Caco-2 (cell line): ENCODE measurements at regions of chr22 and their contacts with region 1.

Region 1: GRCh38 chr22:30733181-30733631 is 38.5 kb downstream of the OSBP2 start:
- DNase-seq: no peak
- H3K4me3 ChIP-seq: no peak overlapping the region
- H3K4me3 Mint-ChIP-seq: no peak overlapping the region
- H3K27ac Mint-ChIP-seq: no peak overlapping the region
- H3K4me1 ChIP-seq: no peaks in the 10 kb centered on the region
- H3K4me1 Mint-ChIP-seq: no peaks in the 10 kb centered on the region
- H3K27me3 ChIP-seq: no peaks in the 10 kb centered on the region
- H3K27me3 Mint-ChIP-seq: peaks cover 5% of the 10 kb centered on the region
- CTCF ChIP-seq: no peak

Region 2: GRCh38 chr22:30705710-30706651 is 27.2 kb before region 1 on chr22:
- CTCF ChIA-PET with region 1: no interaction called
- POLR2A ChIA-PET with region 1: no interaction called
- intact Hi-C with region 1: loop called (anchors 1 kb)
- DNase-seq: no peak
- H3K4me3 ChIP-seq: no peak overlapping the region
- H3K4me3 Mint-ChIP-seq: no peak overlapping the region
- H3K27ac Mint-ChIP-seq: no peak overlapping the region
- H3K4me1 ChIP-seq: no peaks in the 10 kb centered on the region
- H3K4me1 Mint-ChIP-seq: peaks cover 6% of the 10 kb centered on the region
- H3K27me3 ChIP-seq: no peaks in the 10 kb centered on the region
- H3K27me3 Mint-ChIP-seq: peaks cover 2% of the 10 kb centered on the region
- CTCF ChIP-seq: no peak

Region 3: DNA sequence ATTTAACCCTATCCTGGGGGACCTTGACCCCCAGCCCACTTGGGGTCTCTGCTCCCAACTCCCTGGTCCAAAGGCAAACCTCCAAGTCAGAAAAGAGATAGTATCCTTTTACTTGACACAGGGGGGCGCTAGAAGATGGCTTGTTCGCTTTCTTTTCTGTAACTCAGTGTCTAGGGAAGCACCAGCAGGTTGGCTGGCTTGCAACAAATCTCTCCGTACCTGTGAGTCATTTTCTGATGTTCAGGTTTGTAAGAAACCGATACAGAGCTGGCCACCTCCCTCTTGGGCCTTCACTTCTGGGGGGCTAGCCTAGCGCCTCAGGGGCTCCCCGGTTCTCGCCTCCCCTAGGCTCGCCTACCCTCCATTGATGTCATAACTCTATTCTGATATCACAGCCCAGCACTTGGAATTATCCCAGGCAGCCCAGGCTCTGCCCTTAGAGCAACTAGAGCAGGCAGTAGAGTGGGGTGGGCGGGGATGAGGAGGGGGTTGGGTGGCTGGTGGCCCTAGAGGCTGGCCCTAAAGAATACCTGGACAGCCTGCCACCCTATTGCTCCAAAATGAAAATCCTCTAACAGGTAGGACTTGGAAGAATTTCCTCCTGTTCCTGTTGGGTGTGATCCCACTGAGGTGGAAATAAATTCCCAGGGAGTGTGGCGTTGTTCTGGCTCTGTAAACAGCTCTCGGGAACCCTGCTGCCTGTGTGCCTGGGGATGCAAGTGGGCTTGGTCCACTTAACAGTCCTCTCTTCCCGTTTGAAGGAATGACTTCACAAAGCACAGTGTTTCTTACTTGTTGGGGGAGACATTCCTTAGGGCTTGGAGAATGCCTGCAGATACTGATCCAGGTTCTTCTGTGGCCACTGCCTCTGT is 30.8 kb after region 1 on chr22:
- CTCF ChIA-PET with region 1: no interaction called
- POLR2A ChIA-PET with region 1: no interaction called
- intact Hi-C with region 1: no loop called
- DNase-seq: peak; percentile 76 to 78
- H3K4me3 ChIP-seq: no peak overlapping the region
- H3K4me3 Mint-ChIP-seq: no peak overlapping the region
- H3K27ac Mint-ChIP-seq: no peak overlapping the region
- H3K4me1 ChIP-seq: no peaks in the 10 kb centered on the region
- H3K4me1 Mint-ChIP-seq: no peaks in the 10 kb centered on the region
- H3K27me3 ChIP-seq: no peaks in the 10 kb centered on the region
- H3K27me3 Mint-ChIP-seq: no peaks in the 10 kb centered on the region
- CTCF ChIP-seq: peak; percentile 64 to 68